GM12878 (cell line): ENCODE measurements at regions of chr13 and their contacts with region 1.

Region 1: GRCh38 chr13:31930901-31931522 is 100.6 kb upstream of the FRY start:
- DNase-seq: peak; percentile 70
- ATAC-seq: peak; percentile 98
- H3K4me3 ChIP-seq: no peak overlapping the region; the same call in 1 of the 2 replicates
- H3K27ac ChIP-seq: no peak overlapping the region
- H3K4me1 ChIP-seq: peaks cover 11% of the 10 kb centered on the region
- H3K27me3 ChIP-seq: no peaks in the 10 kb centered on the region
- CTCF ChIP-seq: no peak
- EP300 ChIP-seq: peak in 1 of 2 experiments; percentile 67; a peak in 1 of 4 replicates
- POLR2A ChIP-seq: no peak
- RAD21 ChIP-seq: no peak

Region 2: DNA sequence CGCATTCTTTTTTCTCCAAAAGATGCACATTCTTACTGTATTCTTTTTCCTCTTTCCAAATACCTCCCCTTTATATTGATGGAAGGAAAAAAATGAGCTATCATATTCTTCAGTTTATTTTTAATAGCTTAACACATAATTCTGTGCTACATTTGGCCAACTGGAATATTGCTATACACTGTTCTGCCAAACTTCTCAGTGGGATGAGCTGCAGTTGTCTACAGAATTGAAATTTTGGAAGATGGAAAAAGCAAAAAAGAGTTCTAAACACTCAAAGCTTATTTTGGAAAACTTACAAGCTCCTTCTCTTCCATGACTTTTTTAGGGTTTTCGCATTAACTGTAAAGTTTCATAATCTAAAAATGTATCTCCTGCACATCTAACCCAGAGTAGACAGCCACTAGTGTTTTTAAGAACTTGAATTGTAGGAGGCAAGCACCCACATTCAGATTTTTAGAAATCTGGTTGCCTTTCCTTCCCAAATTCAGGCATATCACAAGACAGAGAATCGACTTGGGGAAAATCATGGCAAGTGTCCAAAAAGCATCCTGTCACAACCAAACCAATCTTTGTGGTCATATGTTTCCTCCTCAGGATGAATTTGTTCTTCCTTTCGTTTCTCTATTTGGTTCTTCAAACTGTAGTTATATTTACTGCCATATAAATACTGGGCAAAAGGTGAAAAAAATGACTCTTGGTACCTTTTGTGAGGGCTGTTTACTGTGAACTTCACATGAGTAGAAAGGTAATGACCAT is 10.9 kb before region 1 on chr13:
- CTCF ChIA-PET with region 1: interaction called, 4 read pairs
- POLR2A ChIA-PET with region 1: interaction called, 3 read pairs
- RAD21 ChIA-PET with region 1: interaction called, 3 read pairs
- SMC1A ChIA-PET with region 1: interaction called, 14 read pairs
- in situ Hi-C with region 1: no loop called
- intact Hi-C with region 1: no loop called
- DNase-seq: no peak
- ATAC-seq: no peak; the same call in 2 of the 3 replicates
- H3K4me3 ChIP-seq: no peak overlapping the region
- H3K27ac ChIP-seq: no peak overlapping the region
- H3K4me1 ChIP-seq: peaks cover 9% of the 10 kb centered on the region; the same call in 1 of the 2 replicates
- H3K27me3 ChIP-seq: no peaks in the 10 kb centered on the region
- CTCF ChIP-seq: no peak
- EP300 ChIP-seq: no peak
- POLR2A ChIP-seq: no peak
- RAD21 ChIP-seq: no peak

Region 3: DNA sequence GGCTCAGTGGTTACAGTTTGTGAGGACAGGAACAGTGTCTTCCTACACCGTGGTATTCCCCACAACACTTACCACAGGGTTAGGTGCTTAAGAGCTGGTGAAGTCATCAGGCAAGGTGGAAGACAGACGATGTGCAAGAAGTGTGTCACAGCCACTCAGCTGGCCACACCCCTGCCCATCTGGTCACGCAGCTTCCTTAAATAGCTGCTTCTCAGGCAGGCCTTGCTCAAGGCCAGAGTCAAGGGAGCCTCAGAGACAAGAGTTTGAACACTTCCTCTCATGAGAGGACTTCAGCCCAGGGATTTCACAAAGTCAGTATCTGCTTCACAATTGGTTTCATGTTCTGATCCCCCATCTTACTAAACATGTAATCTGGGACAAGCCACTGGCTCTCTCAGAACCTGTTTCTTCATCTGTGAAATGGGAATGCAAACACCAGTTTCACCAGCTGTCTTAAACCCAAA is 20.2 kb after region 1 on chr13:
- CTCF ChIA-PET with region 1: interaction called, 3 read pairs
- POLR2A ChIA-PET with region 1: interaction called, 4 read pairs
- RAD21 ChIA-PET with region 1: interaction called, 14 read pairs
- SMC1A ChIA-PET with region 1: interaction called, 9 read pairs
- in situ Hi-C with region 1: no loop called
- intact Hi-C with region 1: no loop called
- DNase-seq: peak; percentile 89
- ATAC-seq: peak; percentile 96
- H3K4me3 ChIP-seq: no peak overlapping the region; the same call in 1 of the 2 replicates
- H3K27ac ChIP-seq: peak overlapping the region; percentile 63
- H3K4me1 ChIP-seq: peaks cover 22% of the 10 kb centered on the region
- H3K27me3 ChIP-seq: no peaks in the 10 kb centered on the region
- CTCF ChIP-seq: no peak
- EP300 ChIP-seq: peak; percentile 92 to 93; a peak in 2 of 4 replicates
- POLR2A ChIP-seq: peak; percentile 63
- RAD21 ChIP-seq: no peak

Region 4: DNA sequence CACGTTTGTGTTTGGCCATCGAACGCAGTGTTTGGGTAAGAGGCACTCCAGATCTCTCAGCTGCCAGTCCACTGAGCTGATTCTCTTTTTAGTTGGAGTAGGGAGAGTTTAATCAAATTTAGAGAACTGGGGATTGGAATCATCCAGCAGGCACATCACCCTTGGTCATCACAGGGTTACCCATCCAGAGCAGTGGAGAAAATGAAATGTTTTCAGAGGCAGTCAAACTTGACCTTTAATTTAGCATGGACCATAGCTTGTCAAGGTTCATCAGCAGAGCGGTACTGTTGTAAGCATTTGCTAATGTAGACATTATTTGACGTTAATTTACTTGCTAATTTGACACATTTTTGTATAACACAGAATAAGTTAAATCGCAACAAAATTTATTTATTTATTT is 82.2 kb after region 1 on chr13:
- CTCF ChIA-PET with region 1: no interaction called
- POLR2A ChIA-PET with region 1: no interaction called
- RAD21 ChIA-PET with region 1: no interaction called
- SMC1A ChIA-PET with region 1: no interaction called
- in situ Hi-C with region 1: no loop called
- intact Hi-C with region 1: no loop called
- DNase-seq: no peak
- ATAC-seq: no peak
- H3K4me3 ChIP-seq: no peak overlapping the region
- H3K27ac ChIP-seq: no peak overlapping the region
- H3K4me1 ChIP-seq: no peaks in the 10 kb centered on the region; the same call in 1 of the 2 replicates
- H3K27me3 ChIP-seq: no peaks in the 10 kb centered on the region
- CTCF ChIP-seq: no peak
- EP300 ChIP-seq: no peak
- POLR2A ChIP-seq: no peak
- RAD21 ChIP-seq: no peak